BJ (cell line): ENCODE measurements at regions of chr10 and their contacts with region 1.

Region 1: DNA sequence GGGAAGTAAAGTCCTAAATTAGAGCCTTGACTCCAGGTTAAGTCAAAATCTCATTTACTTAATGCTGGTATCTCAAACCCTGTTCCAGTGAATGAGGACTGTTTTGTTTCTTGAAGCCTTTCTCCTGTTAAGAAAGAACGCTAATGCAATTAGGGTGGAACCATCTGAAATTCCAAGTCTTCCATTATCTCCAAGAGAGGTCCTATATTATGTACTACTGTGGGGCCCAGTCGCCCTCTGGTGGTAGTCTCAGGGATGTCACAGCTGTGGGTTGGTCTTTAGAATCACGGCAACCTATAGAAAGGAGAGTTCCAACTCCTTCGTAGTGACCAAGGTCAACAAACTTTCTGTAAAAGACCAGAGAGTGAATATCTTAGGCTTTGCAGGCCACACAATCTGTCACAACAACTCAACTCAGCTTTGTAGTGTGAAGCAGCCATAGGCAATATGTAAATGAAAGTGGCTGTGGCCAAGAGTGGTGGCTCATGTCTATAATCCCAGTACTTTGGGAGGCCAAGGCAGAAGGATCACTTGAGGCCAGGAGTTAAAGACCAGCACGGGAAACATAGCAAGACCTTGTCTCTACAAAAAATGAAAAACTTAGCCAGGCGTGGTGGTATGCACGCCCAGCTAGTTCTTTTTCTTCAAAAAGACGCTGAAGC is 9.3 kb downstream of the RPP38 start:
- DNase-seq: no peak
- H3K4me3 ChIP-seq: no peak overlapping the region
- H3K27me3 ChIP-seq: no peaks in the 10 kb centered on the region
- CTCF ChIP-seq: peak; percentile 89

Region 2: DNA sequence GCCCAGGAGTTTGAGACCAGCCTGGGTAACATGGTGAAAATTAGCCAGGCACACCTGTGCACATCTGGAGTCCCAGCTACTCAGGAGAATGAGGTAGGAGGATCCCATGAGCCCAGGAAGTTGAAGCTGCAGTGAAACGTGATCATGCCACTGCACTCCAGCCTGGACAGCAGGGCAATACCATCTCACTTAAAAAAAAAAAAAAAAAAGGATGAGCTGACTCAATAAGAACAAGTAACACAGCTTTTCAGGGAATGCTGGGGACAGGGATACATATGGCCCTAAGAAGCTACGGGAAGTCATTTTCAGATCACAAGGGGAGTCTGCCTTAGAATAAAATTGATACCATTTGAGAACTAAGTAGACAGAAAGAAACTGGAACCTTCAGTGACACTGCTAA is 223.0 kb after region 1 on chr10:
- CTCF ChIA-PET with region 1: no interaction called
- POLR2A ChIA-PET with region 1: interaction called, 20 read pairs
- DNase-seq: no peak
- H3K4me3 ChIP-seq: no peak overlapping the region
- H3K27me3 ChIP-seq: no peaks in the 10 kb centered on the region
- CTCF ChIP-seq: no peak